ENCODE measurements at regions of chr12 and their contacts with region 1.

Region 1: GRCh38 chr12:71636704-71637115 is 26.9 kb downstream of the ZFC3H1 start:
- DNase-seq: no peak
- H3K4me3 Mint-ChIP-seq: no peak overlapping the region
- H3K27ac Mint-ChIP-seq: peak overlapping the region; percentile 6
- H3K4me1 Mint-ChIP-seq: peaks cover 18% of the 10 kb centered on the region
- H3K27me3 Mint-ChIP-seq: no peaks in the 10 kb centered on the region

Region 2: DNA sequence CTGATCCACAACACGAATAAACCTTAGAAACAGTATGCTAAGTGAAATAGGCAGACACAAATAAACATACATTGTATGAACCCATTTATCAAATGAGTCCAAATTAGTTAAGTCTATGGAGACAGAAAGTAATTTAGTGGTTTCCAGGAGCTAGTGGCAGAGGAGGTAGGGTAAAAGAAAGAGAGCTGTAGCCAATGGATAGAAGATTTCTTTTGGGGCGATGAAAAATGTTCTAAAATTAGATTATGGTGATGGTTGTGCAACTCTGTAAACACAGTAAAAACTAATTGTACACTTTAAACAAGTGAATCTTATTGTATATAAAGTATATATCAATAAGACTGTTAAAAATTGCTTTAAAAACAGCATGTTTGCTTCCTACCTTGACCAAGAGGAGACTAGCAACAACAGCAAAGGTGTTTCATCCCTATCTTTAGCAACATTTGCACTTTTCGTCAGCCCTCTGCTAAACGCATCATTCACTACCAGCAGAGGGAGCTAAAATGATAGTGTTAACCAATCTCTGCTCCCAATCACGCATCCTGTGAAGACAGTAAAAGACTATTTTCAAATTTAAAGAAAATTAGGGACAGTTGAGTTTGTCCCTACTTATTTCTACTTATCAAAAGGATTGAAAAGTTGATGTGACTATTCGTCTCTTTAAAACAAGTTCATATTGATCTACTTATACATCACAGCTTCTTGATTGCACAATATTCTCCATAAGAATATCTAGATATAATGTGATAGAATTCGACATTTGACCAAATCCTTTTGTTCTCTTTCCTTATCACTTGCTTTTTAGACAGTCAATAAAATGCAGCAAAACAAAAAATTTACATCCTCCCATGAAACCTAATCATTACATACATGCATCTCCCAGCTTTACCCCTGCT is 221.1 kb before region 1 on chr12:
- intact Hi-C with region 1: loop called (anchors 1 kb)
- DNase-seq: no peak
- H3K4me3 Mint-ChIP-seq: no peak overlapping the region
- H3K27ac Mint-ChIP-seq: no peak overlapping the region
- H3K4me1 Mint-ChIP-seq: no peaks in the 10 kb centered on the region
- H3K27me3 Mint-ChIP-seq: peaks cover 10% of the 10 kb centered on the region

Region 3: GRCh38 chr12:71626098-71626497 is 10.6 kb before region 1 on chr12:
- intact Hi-C with region 1: loop called (anchors 1 kb)
- DNase-seq: no peak
- H3K4me3 Mint-ChIP-seq: peak overlapping the region; percentile 46
- H3K27ac Mint-ChIP-seq: peak overlapping the region; percentile 68
- H3K4me1 Mint-ChIP-seq: peaks cover 21% of the 10 kb centered on the region
- H3K27me3 Mint-ChIP-seq: no peaks in the 10 kb centered on the region